MCF 10A (cell line): ENCODE measurements at regions of chr19 and their contacts with region 1.

Region 1: DNA sequence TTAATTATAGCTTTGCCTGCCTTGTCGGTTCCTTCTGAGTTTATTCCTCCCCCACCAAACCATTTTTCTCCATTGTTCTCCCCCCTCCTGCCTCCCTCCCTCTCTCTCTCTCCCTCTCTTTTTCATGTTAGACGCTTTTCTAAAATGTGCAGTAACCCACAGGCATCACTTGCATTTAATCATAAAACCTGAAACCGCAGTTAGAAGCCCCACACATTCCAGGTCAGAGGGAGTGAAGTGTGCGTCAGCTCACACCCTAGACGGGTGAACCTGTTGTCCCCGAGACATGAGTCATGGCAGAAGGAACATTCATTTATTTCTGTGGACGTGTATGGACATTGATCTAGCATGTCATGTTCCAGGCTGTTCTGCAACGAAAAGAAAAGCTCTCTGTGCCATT is 19.9 kb downstream of the ONECUT3 start:
- DNase-seq: peak; percentile 93
- H3K4me3 Mint-ChIP-seq: peak overlapping the region; percentile 24
- H3K27ac Mint-ChIP-seq: peak overlapping the region; percentile 44
- H3K4me1 Mint-ChIP-seq: peaks cover 29% of the 10 kb centered on the region
- H3K27me3 Mint-ChIP-seq: no peaks in the 10 kb centered on the region
- CTCF ChIP-seq: no peak

Region 2: DNA sequence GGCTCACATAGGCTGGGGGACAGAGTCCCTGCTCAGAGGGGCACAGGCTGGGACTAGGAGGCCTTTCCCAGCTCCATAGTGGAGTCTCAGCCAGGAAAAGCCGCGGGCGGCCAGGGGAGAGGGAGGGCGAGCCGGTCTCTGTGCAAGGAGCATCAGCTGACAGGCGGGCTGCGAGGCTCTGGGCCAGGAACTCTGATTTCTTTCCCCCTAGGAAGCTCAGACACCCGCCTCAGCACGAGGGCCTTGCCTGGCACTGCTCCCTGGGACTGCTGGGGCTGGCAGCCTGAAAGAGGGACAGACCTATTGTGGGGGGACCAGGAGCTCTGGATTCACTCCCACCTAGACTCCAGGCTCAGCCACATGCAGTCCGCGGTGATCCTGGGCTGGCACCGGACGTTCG is 251.5 kb before region 1 on chr19:
- CTCF ChIA-PET with region 1: no interaction called
- POLR2A ChIA-PET with region 1: no interaction called
- intact Hi-C with region 1: no loop called
- DNase-seq: no peak
- H3K4me3 Mint-ChIP-seq: no peak overlapping the region
- H3K27ac Mint-ChIP-seq: no peak overlapping the region
- H3K4me1 Mint-ChIP-seq: no peaks in the 10 kb centered on the region
- H3K27me3 Mint-ChIP-seq: peaks cover 28% of the 10 kb centered on the region
- CTCF ChIP-seq: no peak

Region 3: GRCh38 chr19:1747285-1748114 is 25.7 kb before region 1 on chr19:
- CTCF ChIA-PET with region 1: interaction called, 7 read pairs
- POLR2A ChIA-PET with region 1: interaction called, 23 read pairs
- intact Hi-C with region 1: no loop called
- DNase-seq: peak; percentile 100
- H3K4me3 Mint-ChIP-seq: peak overlapping the region; percentile 81
- H3K27ac Mint-ChIP-seq: peak overlapping the region; percentile 90
- H3K4me1 Mint-ChIP-seq: no peaks in the 10 kb centered on the region
- H3K27me3 Mint-ChIP-seq: peaks cover 10% of the 10 kb centered on the region
- CTCF ChIP-seq: no peak